Panc1 (cell line): ENCODE measurements at regions of chr10 and their contacts with region 1.

Region 1: GRCh38 chr10:86628311-86628710 is 26.0 kb upstream of the OPN4 start:
- DNase-seq: no peak
- ATAC-seq: no peak
- H3K4me3 ChIP-seq: no peak overlapping the region
- H3K27ac ChIP-seq: no peak overlapping the region
- H3K4me1 ChIP-seq: no peaks in the 10 kb centered on the region
- H3K27me3 ChIP-seq: peaks cover 3% of the 10 kb centered on the region; the same call in 1 of the 2 replicates
- CTCF ChIP-seq: no peak

Region 2: GRCh38 chr10:86330778-86331763 is 297.2 kb before region 1 on chr10:
- CTCF ChIA-PET with region 1: no interaction called
- POLR2A ChIA-PET with region 1: no interaction called
- in situ Hi-C with region 1: no loop called
- intact Hi-C with region 1: no loop called
- DNase-seq: no peak
- ATAC-seq: 0 out of 2 replicates have a peak, but pooled peaks have one; percentile 39
- H3K4me3 ChIP-seq: no peak overlapping the region
- H3K27ac ChIP-seq: no peak overlapping the region
- H3K4me1 ChIP-seq: no peaks in the 10 kb centered on the region
- H3K27me3 ChIP-seq: peaks cover 6% of the 10 kb centered on the region; the same call in 1 of the 2 replicates
- CTCF ChIP-seq: no peak; the same call in 1 of the 2 replicates

Region 3: GRCh38 chr10:86688398-86688921 is 60.1 kb after region 1 on chr10:
- CTCF ChIA-PET with region 1: no interaction called
- POLR2A ChIA-PET with region 1: no interaction called
- in situ Hi-C with region 1: no loop called
- intact Hi-C with region 1: loop called (anchors 10 kb)
- DNase-seq: no peak
- ATAC-seq: peak; percentile 79
- H3K4me3 ChIP-seq: no peak overlapping the region
- H3K27ac ChIP-seq: no peak overlapping the region
- H3K4me1 ChIP-seq: peaks cover 22% of the 10 kb centered on the region
- H3K27me3 ChIP-seq: no peaks in the 10 kb centered on the region
- CTCF ChIP-seq: peak; percentile 93

Region 4: GRCh38 chr10:87691506-87692070 is 1063.3 kb after region 1 on chr10:
- CTCF ChIA-PET with region 1: no interaction called
- POLR2A ChIA-PET with region 1: no interaction called
- in situ Hi-C with region 1: no loop called
- intact Hi-C with region 1: no loop called
- DNase-seq: no peak
- ATAC-seq: no peak
- H3K4me3 ChIP-seq: no peak overlapping the region
- H3K27ac ChIP-seq: no peak overlapping the region
- H3K4me1 ChIP-seq: no peaks in the 10 kb centered on the region
- H3K27me3 ChIP-seq: no peaks in the 10 kb centered on the region
- CTCF ChIP-seq: no peak